ENCODE measurements at regions of chr13 and their contacts with region 1.

Region 1: DNA sequence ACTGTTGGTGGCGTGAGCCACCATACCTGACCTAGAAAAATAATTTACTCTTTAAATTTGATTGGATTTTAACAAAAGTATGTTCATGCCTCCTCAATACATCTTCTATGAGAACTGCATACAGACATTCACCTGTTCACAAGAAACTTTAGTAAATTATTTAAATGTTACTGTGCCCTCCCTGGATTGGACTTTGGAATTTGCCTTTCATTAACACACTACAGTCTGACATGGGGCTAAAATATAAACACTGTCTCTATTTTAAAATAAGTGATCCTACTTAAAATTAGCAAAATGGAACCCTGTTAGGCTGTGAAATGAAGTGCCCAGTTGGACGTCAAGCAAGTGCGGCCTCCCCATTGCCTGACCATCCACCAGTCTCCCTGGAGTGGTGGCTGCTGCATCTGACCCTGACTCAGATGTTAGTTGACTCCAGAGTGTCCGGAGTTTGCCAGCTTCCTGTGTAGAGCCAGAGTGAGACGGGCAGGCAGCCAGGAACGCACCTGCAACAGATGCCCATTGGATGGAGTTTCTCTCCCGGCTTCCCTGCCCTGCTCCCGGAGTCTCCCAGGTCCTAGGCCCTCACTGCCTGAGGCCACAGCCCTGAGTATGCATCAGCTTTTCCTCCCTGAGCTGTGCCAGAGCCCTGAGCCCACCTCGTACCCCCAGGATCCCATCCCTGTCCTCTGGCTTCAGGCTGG is 45.9 kb upstream of the ATP11A start:
- DNase-seq: peak in 1 of 2 donors; percentile 11
- H3K4me3 ChIP-seq: no peak overlapping the region
- H3K27ac ChIP-seq: no peak overlapping the region
- H3K4me1 ChIP-seq: no peaks in the 10 kb centered on the region
- H3K27me3 ChIP-seq: no peaks in the 10 kb centered on the region
- CTCF ChIP-seq: no peak
- POLR2A ChIP-seq: no peak

Region 2: GRCh38 chr13:112521073-112521685 is 122.7 kb before region 1 on chr13:
- intact Hi-C with region 1: no loop called
- DNase-seq: no peak
- H3K4me3 ChIP-seq: no peak overlapping the region
- H3K27ac ChIP-seq: no peak overlapping the region
- H3K4me1 ChIP-seq: no peaks in the 10 kb centered on the region
- H3K27me3 ChIP-seq: no peaks in the 10 kb centered on the region
- CTCF ChIP-seq: no peak
- POLR2A ChIP-seq: no peak

Region 3: DNA sequence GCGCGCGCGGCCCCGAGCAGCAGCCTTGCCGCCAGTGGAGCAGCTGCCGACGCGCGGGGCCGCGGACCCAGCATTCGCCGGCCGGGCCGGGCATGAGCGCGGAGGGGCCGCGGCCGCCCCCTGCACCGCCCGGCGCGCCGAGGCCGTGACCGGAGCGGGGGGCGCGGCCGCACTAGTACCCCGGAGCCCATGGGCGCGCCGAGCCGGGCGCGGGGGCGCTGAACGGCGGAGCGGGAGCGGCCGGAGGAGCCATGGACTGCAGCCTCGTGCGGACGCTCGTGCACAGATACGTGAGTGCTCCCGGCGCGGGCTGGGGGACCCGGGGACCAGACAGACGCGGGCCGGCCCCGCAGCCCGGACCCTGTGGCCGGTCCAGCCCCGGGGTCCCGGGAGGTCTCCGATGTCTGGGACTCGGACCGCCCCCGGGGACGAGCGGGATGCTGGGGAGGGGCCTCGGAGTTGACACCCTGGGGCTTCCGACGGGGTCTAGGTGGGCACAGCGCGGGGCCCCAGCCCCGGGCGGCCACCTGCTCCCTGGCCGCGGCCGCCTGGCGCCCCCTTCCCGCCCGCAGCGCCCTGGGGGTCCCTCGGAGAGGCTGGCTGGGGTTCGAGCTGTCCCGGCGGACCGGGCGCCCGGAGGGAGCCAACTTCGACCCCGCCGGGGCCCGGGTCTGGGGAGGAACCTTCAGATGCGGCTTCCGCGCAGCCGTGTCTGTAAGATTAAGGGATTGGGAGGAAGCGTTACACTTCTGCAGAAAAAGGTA is 46.4 kb after region 1 on chr13:
- intact Hi-C with region 1: no loop called
- DNase-seq: peak; percentile 42 to 51
- H3K4me3 ChIP-seq: peak overlapping the region; percentile 64 to 67
- H3K27ac ChIP-seq: peak overlapping the region; percentile 92 to 94
- H3K4me1 ChIP-seq: no peaks in the 10 kb centered on the region
- H3K27me3 ChIP-seq: no peaks in the 10 kb centered on the region
- CTCF ChIP-seq: no peak
- POLR2A ChIP-seq: no peak

Region 4: GRCh38 chr13:112726016-112726767 is 82.3 kb after region 1 on chr13:
- intact Hi-C with region 1: no loop called
- DNase-seq: no peak
- H3K4me3 ChIP-seq: no peak overlapping the region
- H3K27ac ChIP-seq: no peak overlapping the region
- H3K4me1 ChIP-seq: peaks cover 0 to 14% of the 10 kb centered on the region in 2 donors
- H3K27me3 ChIP-seq: no peaks in the 10 kb centered on the region
- CTCF ChIP-seq: no peak
- POLR2A ChIP-seq: no peak

Region 5: GRCh38 chr13:112874751-112875300 is 230.9 kb after region 1 on chr13:
- intact Hi-C with region 1: loop called (anchors 5 kb)
- DNase-seq: no peak
- H3K4me3 ChIP-seq: no peak overlapping the region
- H3K27ac ChIP-seq: peak overlapping the region in 1 of 2 donors; percentile 52
- H3K4me1 ChIP-seq: no peaks in the 10 kb centered on the region
- H3K27me3 ChIP-seq: no peaks in the 10 kb centered on the region
- CTCF ChIP-seq: no peak
- POLR2A ChIP-seq: no peak